ENCODE measurements at regions of chr19 and their contacts with region 1.

Region 1: DNA sequence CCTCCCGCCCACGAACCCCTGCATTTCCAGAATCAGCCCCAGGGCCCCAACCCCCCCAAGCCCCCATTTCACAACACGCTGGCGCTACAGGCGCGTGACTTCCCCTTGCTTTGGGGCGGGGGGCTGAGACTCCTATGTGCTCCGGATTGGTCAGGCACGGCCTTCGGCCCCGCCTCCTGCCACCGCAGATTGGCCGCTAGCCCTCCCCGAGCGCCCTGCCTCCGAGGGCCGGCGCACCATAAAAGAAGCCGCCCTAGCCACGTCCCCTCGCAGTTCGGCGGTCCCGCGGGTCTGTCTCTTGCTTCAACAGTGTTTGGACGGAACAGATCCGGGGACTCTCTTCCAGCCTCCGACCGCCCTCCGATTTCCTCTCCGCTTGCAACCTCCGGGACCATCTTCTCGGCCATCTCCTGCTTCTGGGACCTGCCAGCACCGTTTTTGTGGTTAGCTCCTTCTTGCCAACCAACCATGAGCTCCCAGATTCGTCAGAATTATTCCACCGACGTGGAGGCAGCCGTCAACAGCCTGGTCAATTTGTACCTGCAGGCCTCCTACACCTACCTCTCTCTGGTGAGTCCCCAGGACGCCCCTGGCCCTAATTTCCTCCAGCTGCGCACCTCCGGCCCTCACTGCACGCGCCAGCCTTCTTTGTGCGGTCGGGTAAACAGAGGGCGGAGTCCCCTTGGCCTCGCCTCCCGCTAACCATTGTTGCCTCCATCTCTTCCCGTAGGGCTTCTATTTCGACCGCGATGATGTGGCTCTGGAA is at the start of gene FTL:
- DNase-seq: peak; percentile 93 to 96
- H3K4me3 ChIP-seq: peak within 1 kb of the TSS; percentile 86 to 96 (median 92)
- H3K27ac ChIP-seq: peak within 1 kb of the TSS; percentile 76
- H3K4me1 ChIP-seq: peaks cover 4 to 18% (median 12%) of the 10 kb centered on the region in 4 experiments
- H3K27me3 ChIP-seq: no peaks in the 10 kb centered on the region
- CTCF ChIP-seq: no peak
- EP300 ChIP-seq: no peak
- POLR2A ChIP-seq: peak; percentile 98 to 99
- RAD21 ChIP-seq: no peak
- total RNA-seq, gene FTL: 1,751 and 1,764 TPM in 2 replicates

Region 2: GRCh38 chr19:48683349-48683748 is 281.9 kb before region 1 on chr19:
- CTCF ChIA-PET with region 1: no interaction called
- POLR2A ChIA-PET with region 1: no interaction called
- DNase-seq: no peak
- H3K4me3 ChIP-seq: no peak overlapping the region
- H3K27ac ChIP-seq: no peak overlapping the region
- H3K4me1 ChIP-seq: no peaks in the 10 kb centered on the region; a peak in 1 of 7 replicates
- H3K27me3 ChIP-seq: no peaks in the 10 kb centered on the region
- CTCF ChIP-seq: no peak
- EP300 ChIP-seq: no peak
- POLR2A ChIP-seq: no peak
- RAD21 ChIP-seq: no peak

Region 3: GRCh38 chr19:48899781-48900476 is 65.3 kb before region 1 on chr19 and contains the start of gene NUCB1:
- CTCF ChIA-PET with region 1: interaction called, 9 read pairs
- POLR2A ChIA-PET with region 1: interaction called, 17 read pairs
- DNase-seq: peak; percentile 95 to 99
- H3K4me3 ChIP-seq: peak within 1 kb of the TSS; percentile 58 to 90 (median 84)
- H3K27ac ChIP-seq: peak within 1 kb of the TSS; percentile 41; the same call in 1 of the 2 replicates
- H3K4me1 ChIP-seq: peaks cover 0 to 4% (median 0%) of the 10 kb centered on the region in 4 experiments; a peak in 4 of 7 replicates
- H3K27me3 ChIP-seq: no peaks in the 10 kb centered on the region
- CTCF ChIP-seq: peak in 2 of 3 experiments; percentile 8 to 44; a peak in 2 of 4 replicates
- EP300 ChIP-seq: no peak
- POLR2A ChIP-seq: 0 out of 3 replicates have a peak, but pooled peaks of 1 of the 2 experiments have one; percentile 41
- RAD21 ChIP-seq: no peak
- total RNA-seq, gene NUCB1: 106 and 111 TPM in 2 replicates

Region 4: GRCh38 chr19:48933382-48933932 is 31.8 kb before region 1 on chr19 and contains the start of gene DHDH:
- CTCF ChIA-PET with region 1: interaction called, 18 read pairs
- POLR2A ChIA-PET with region 1: interaction called, 29 read pairs
- DNase-seq: peak; percentile 92 to 97
- H3K4me3 ChIP-seq: peak within 1 kb of the TSS; percentile 2 to 58 (median 36); a peak in 7 of 8 replicates
- H3K27ac ChIP-seq: no peak within 1 kb of the TSS
- H3K4me1 ChIP-seq: peaks cover 3 to 8% (median 6%) of the 10 kb centered on the region in 4 experiments; a peak in 6 of 7 replicates
- H3K27me3 ChIP-seq: peaks cover 0 to 14% (median 10%) of the 10 kb centered on the region in 4 experiments; a peak in 5 of 7 replicates
- CTCF ChIP-seq: no peak
- EP300 ChIP-seq: no peak
- POLR2A ChIP-seq: peak in 1 of 2 experiments; percentile 73; a peak in 2 of 3 replicates
- RAD21 ChIP-seq: no peak
- total RNA-seq, gene DHDH: 2.2 and 2.7 TPM in 2 replicates

Region 5: GRCh38 chr19:48975947-48976847 is 11.0 kb after region 1 on chr19:
- CTCF ChIA-PET with region 1: interaction called, 11 read pairs
- POLR2A ChIA-PET with region 1: interaction called, 56 read pairs
- DNase-seq: peak in 1 of 2 experiments; percentile 72
- H3K4me3 ChIP-seq: no peak overlapping the region
- H3K27ac ChIP-seq: no peak overlapping the region
- H3K4me1 ChIP-seq: no peaks in the 10 kb centered on the region
- H3K27me3 ChIP-seq: no peaks in the 10 kb centered on the region
- CTCF ChIP-seq: no peak
- EP300 ChIP-seq: no peak
- POLR2A ChIP-seq: no peak
- RAD21 ChIP-seq: no peak

Region 6: GRCh38 chr19:48993175-48994034 is 28.2 kb after region 1 on chr19 and contains the starts of genes GYS1 and RUVBL2:
- CTCF ChIA-PET with region 1: interaction called, 13 read pairs
- POLR2A ChIA-PET with region 1: interaction called, 37 read pairs
- DNase-seq: peak; percentile 97 to 99
- H3K4me3 ChIP-seq: peak within 1 kb of the TSS; percentile 74 to 97 (median 92)
- H3K27ac ChIP-seq: peak within 1 kb of the TSS; percentile 63
- H3K4me1 ChIP-seq: peaks cover 0 to 3% (median 0%) of the 10 kb centered on the region in 4 experiments; a peak in 2 of 7 replicates
- H3K27me3 ChIP-seq: no peaks in the 10 kb centered on the region
- CTCF ChIP-seq: peak; percentile 78 to 92 (median 88)
- EP300 ChIP-seq: no peak
- POLR2A ChIP-seq: peak in 1 of 2 experiments; percentile 77; a peak in 2 of 3 replicates
- RAD21 ChIP-seq: peak in 1 of 2 experiments; percentile 8; a peak in 2 of 4 replicates
- total RNA-seq, gene GYS1: 37.8 and 38.7 TPM in 2 replicates
- total RNA-seq, gene RUVBL2: 152 and 160 TPM in 2 replicates

Region 7: GRCh38 chr19:49080392-49080791 is 115.2 kb after region 1 on chr19:
- CTCF ChIA-PET with region 1: no interaction called
- POLR2A ChIA-PET with region 1: no interaction called
- DNase-seq: no peak
- H3K4me3 ChIP-seq: no peak overlapping the region
- H3K27ac ChIP-seq: no peak overlapping the region
- H3K4me1 ChIP-seq: no peaks in the 10 kb centered on the region; a peak in 1 of 7 replicates
- H3K27me3 ChIP-seq: peaks cover 0 to 3% (median 0%) of the 10 kb centered on the region in 4 experiments; a peak in 1 of 7 replicates
- CTCF ChIP-seq: no peak
- EP300 ChIP-seq: no peak
- POLR2A ChIP-seq: no peak
- RAD21 ChIP-seq: no peak